Aorta (tissue), 5 donors: ENCODE measurements at regions of chr3 and their contacts with region 1.

Region 1: DNA sequence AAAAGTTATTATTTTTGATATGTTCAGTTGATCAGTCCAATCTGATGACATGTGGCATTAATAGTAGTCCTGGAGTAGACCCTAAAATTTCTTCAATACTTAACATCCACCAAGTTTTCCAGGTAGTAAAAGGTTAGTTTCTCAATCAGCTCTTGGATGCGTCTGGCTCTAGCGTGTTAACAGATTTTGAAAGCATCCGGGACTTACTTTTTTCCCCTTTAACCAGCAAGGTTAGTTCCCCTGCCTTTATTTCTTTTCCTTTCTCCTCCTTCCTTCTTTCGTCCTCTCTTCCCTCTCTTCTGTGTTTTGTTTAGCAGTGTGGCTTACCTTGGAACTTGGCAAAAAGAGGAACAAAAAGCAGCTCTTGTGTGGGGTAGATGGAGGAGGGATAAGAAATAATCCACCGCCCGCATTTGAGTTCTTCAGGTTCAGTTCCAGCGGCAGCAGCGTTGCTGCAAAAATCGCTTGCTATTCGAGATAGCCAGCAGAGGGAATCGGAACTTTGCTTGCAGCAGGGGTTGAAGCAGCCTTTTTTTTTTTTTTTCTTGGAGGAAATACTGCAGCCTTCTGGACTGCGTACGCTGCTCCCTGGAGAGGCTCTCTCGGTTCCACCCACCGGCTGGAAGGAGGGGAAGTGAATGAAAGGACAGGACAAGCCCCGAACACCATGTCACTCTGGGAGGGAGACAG is at the start of gene RBMS3:
- DNase-seq: peak; percentile 93 to 95
- ATAC-seq: peak; percentile 96
- H3K4me3 ChIP-seq: peak within 1 kb of the TSS; percentile 98 to 100
- H3K27ac ChIP-seq: peak within 1 kb of the TSS; percentile 87 to 93
- H3K4me1 ChIP-seq: peaks cover 0 to 3% of the 10 kb centered on the region in 2 donors
- H3K27me3 ChIP-seq: no peaks in the 10 kb centered on the region
- total RNA-seq, gene RBMS3: 157 to 203 TPM

Region 2: GRCh38 chr3:29072611-29073010 is 207.9 kb before region 1 on chr3:
- intact Hi-C with region 1: loop called in 1 of 2 experiments (anchors 10 kb)
- DNase-seq: no peak
- ATAC-seq: no peak
- H3K4me3 ChIP-seq: no peak overlapping the region
- H3K27ac ChIP-seq: no peak overlapping the region
- H3K4me1 ChIP-seq: no peaks in the 10 kb centered on the region
- H3K27me3 ChIP-seq: no peaks in the 10 kb centered on the region

Region 3: GRCh38 chr3:29335438-29335837 is 54.9 kb after region 1 on chr3:
- intact Hi-C with region 1: loop called (anchors 5 kb)
- DNase-seq: peak; percentile 81 to 91
- ATAC-seq: peak; percentile 82
- H3K4me3 ChIP-seq: peak overlapping the region; percentile 39 to 90
- H3K27ac ChIP-seq: peak overlapping the region; percentile 40 to 90
- H3K4me1 ChIP-seq: peaks cover 4 to 7% of the 10 kb centered on the region in 2 donors
- H3K27me3 ChIP-seq: no peaks in the 10 kb centered on the region

Region 4: GRCh38 chr3:29430558-29430971 is 150.0 kb after region 1 on chr3:
- intact Hi-C with region 1: loop called in 1 of 2 experiments (anchors 5 kb)
- DNase-seq: no peak
- ATAC-seq: no peak
- H3K4me3 ChIP-seq: no peak overlapping the region
- H3K27ac ChIP-seq: peak overlapping the region; percentile 3 to 74
- H3K4me1 ChIP-seq: peaks cover 7 to 8% of the 10 kb centered on the region in 2 donors
- H3K27me3 ChIP-seq: no peaks in the 10 kb centered on the region

Region 5: DNA sequence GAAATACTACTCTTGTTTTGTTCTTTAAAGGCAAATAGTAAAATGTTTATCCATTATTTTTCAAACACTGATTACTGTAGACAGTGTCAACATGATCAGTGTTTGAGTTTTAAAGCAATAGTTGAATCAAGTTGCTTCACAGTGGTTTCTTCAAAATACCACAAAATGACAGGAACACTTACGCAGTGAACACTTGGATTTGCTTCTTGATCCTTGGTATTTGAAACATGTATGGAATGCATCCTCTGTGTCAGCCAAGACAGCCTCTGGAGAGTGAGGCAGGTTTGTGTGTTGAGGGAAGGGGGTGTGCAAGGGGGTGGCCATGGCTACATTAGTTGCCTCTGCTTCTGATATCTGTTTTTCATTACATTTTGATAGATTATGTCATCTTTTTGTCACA is 413.3 kb after region 1 on chr3:
- intact Hi-C with region 1: loop called in 1 of 2 experiments (anchors 5 kb)
- DNase-seq: no peak
- ATAC-seq: no peak
- H3K4me3 ChIP-seq: no peak overlapping the region
- H3K27ac ChIP-seq: no peak overlapping the region
- H3K4me1 ChIP-seq: peaks cover 4 to 5% of the 10 kb centered on the region in 2 donors
- H3K27me3 ChIP-seq: no peaks in the 10 kb centered on the region

Region 6: GRCh38 chr3:29764603-29765254 is 484.2 kb after region 1 on chr3:
- intact Hi-C with region 1: loop called (anchors 2 to 5 kb)
- DNase-seq: no peak
- ATAC-seq: peak; percentile 76
- H3K4me3 ChIP-seq: no peak overlapping the region
- H3K27ac ChIP-seq: no peak overlapping the region
- H3K4me1 ChIP-seq: peaks cover 0 to 7% of the 10 kb centered on the region in 2 donors
- H3K27me3 ChIP-seq: no peaks in the 10 kb centered on the region